Mammary epithelial cell (primary cell): ENCODE measurements at regions of chr5 and their contacts with region 1.

Region 1: GRCh38 chr5:150503977-150504620 is 3.8 kb upstream of the NDST1 start:
- DNase-seq: no peak
- H3K4me3 ChIP-seq: no peak overlapping the region
- H3K27ac ChIP-seq: no peak overlapping the region
- H3K4me1 ChIP-seq: peaks cover 87% of the 10 kb centered on the region
- H3K27me3 ChIP-seq: no peaks in the 10 kb centered on the region
- CTCF ChIP-seq: peak in 1 of 2 donors; percentile 2

Region 2: GRCh38 chr5:150398722-150399523 is 105.2 kb before region 1 on chr5:
- CTCF ChIA-PET with region 1: no interaction called
- dilution Hi-C with region 1: loop called (anchors 5 kb)
- in situ Hi-C with region 1: no loop called
- intact Hi-C with region 1: no loop called
- DNase-seq: no peak
- H3K4me3 ChIP-seq: no peak overlapping the region
- H3K27ac ChIP-seq: no peak overlapping the region
- H3K4me1 ChIP-seq: no peaks in the 10 kb centered on the region
- H3K27me3 ChIP-seq: no peaks in the 10 kb centered on the region
- CTCF ChIP-seq: peak; percentile 27 to 29